Ovary (tissue), 10 donors: ENCODE measurements at regions of chr5 and their contacts with region 1.

Region 1: GRCh38 chr5:139197710-139198669 is at the start of gene SIL1:
- DNase-seq: peak; percentile 97 to 99 (median 98)
- H3K4me3 ChIP-seq: peak within 1 kb of the TSS; percentile 54
- H3K27ac ChIP-seq: peak within 1 kb of the TSS; percentile 90 to 96
- H3K4me1 ChIP-seq: no peaks in the 10 kb centered on the region
- H3K27me3 ChIP-seq: no peaks in the 10 kb centered on the region
- CTCF ChIP-seq: peak in 1 of 3 donors; percentile 16
- EP300 ChIP-seq: no peak
- POLR2A ChIP-seq: peak; percentile 88
- total RNA-seq, gene SIL1: 15.7 to 45.2 (median 34.9) TPM

Region 2: GRCh38 chr5:138927979-138928378 is 270.0 kb before region 1 on chr5:
- intact Hi-C with region 1: no loop called
- DNase-seq: peak in 4 of 5 donors; percentile 46 to 72 (median 58)
- H3K4me3 ChIP-seq: no peak overlapping the region
- H3K27ac ChIP-seq: no peak overlapping the region
- H3K4me1 ChIP-seq: peaks cover 5% of the 10 kb centered on the region
- H3K27me3 ChIP-seq: no peaks in the 10 kb centered on the region
- CTCF ChIP-seq: no peak
- EP300 ChIP-seq: no peak
- POLR2A ChIP-seq: no peak

Region 3: DNA sequence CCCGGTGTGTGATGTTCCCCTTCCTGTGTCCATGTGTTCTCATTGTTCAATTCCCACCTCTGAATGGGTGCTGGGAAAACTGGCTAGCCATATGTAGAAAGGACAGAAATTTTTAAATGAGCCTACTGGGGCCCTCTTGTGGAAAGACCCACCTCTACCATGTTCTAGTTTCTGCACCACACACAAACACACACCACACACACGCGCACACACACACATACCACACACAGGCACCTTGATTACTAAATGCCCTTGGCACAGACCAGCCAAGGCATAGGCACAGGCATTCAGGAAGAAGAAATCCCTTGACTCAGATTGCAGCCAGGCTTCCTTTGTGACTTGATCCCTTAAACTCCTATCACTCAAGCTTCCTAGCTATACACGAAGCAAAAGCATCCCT is 60.3 kb before region 1 on chr5:
- intact Hi-C with region 1: loop called in 1 of 4 experiments (anchors 10 kb)
- DNase-seq: no peak
- H3K4me3 ChIP-seq: no peak overlapping the region
- H3K27ac ChIP-seq: no peak overlapping the region
- H3K4me1 ChIP-seq: peaks cover 32% of the 10 kb centered on the region
- H3K27me3 ChIP-seq: no peaks in the 10 kb centered on the region
- CTCF ChIP-seq: no peak
- EP300 ChIP-seq: no peak
- POLR2A ChIP-seq: no peak